Adrenal gland (tissue), 19 donors: ENCODE measurements at regions of chr5 and their contacts with region 1.

Region 1: DNA sequence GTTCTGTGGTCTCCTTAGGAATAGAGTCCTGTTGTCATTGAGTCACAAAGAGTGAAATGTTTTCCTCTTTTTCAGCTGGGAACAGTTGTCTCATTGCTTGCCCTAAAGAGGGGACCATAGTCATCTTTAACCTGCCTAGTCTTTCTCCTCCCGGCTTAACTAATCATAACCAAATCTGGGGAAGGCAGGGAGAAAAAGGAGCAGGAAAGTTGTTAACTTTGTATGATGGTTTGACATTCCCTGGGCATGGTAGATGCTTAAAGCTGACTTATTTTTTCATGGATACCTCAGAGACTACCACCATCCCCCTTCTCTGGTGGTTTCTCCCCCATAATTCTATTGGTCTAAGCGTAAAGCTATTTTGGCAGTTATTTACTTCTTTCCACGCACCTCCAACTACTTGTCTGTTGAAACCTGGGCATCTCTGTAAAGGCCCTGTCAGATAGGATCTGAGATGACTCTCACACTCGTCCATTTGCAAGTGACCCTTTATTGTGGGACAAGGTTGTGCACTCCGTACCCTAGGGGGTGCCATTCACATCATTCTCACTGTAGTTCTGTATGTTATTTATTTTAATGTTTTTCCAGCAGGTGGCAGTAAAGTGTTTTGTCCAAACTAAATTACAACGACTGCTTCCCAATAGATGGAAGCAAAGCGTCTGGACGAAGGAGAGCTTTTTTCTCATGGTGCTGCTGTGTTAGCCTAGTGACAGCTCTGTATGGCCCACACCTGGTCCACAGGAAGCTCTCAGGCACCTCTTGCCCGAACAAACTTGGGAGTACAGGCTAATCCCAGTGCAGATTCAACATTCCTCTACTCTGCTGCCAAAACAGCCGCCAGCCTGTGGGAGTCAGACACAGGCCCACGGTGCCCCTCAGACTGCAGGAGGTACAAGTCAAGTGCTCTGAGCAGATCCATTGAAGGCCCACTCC is 3.0 kb upstream of the FAM13B start:
- DNase-seq: peak; percentile 66 to 85 (median 71)
- H3K4me3 ChIP-seq: no peak overlapping the region
- H3K27ac ChIP-seq: peak overlapping the region in 3 of 5 donors; percentile 48 to 53 (median 52)
- H3K4me1 ChIP-seq: peaks cover 11 to 37% of the 10 kb centered on the region in 2 donors
- H3K27me3 ChIP-seq: no peaks in the 10 kb centered on the region
- CTCF ChIP-seq: peak; percentile 82 to 98 (median 90)
- POLR2A ChIP-seq: no peak

Region 2: DNA sequence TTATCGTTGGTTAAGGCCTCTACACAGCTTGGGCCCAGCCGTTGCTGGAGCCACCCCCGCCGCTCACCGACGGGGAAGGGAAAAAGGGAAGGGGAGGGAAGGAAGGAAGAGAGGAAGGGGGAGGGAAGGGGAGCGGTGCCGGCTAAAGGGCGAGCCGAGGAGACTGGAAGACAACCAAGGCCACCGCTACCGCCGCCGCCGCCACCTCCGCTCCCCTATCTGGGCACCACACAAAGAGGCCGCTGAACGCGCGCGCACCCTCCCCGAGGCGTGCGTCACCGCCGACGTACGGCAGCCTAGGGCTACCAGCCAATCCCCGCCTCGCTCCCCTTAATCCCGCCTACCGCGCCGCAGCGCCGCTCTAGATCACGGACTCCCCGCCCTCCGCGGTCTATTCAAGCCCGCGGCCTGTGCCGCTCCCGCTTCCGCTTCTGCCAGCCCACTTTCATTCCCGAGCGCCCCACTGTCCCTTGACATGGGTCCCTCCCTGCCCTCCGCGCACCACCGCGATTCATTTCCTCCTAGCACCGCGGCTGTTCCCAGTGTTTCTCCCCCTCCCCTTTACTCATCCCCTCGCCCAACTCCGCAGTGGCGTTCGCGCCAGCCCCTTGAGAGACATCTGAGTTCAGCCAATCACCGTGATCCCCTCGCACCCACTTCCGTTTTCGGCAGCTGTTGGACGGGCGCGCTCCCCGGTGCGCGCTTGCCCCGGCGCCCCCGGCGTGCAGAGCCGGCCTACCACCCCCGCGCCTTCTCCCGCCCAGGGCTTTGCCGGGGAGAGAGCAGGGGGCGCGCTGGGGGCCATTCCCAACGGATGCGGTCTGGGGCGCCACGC is 281.5 kb before region 1 on chr5 and contains the start of gene HNRNPA0:
- intact Hi-C with region 1: no loop called
- DNase-seq: peak; percentile 96 to 98 (median 98)
- H3K4me3 ChIP-seq: peak within 1 kb of the TSS; percentile 85 to 97 (median 90)
- H3K27ac ChIP-seq: peak within 1 kb of the TSS; percentile 98 to 100 (median 100)
- H3K4me1 ChIP-seq: peaks cover 8 to 30% of the 10 kb centered on the region in 2 donors
- H3K27me3 ChIP-seq: no peaks in the 10 kb centered on the region
- CTCF ChIP-seq: peak in 1 of 6 experiments; percentile 4
- POLR2A ChIP-seq: peak; percentile 95 to 99
- total RNA-seq, gene HNRNPA0: 8.9 to 45.5 (median 14.4) TPM

Region 3: DNA sequence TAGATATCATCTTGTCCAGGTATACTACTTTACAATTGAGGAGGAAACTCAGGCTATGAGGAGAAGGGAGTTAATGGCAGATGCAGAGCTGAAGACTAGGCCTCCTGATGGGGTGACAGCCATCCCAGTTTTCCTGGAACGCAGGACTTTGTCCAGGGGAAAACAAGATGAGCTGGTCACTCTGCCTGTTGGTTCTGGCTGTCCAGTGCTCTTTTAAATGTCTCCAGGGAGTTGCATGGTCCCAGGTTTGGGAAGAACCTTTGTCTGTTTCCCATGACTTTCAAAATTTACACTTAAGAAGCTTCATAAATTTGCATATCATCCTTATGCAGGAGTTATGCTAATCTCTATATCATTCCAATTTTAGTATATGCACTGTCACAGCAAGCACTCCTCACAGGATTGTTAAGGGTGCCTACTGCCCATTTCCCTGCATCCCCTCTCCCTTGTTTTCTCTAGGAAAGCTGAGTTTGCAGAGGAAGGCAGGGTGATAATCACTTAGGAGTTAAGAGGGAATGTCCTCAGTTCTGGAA is 33.3 kb after region 1 on chr5:
- intact Hi-C with region 1: loop called in 1 of 2 experiments (anchors 2 kb)
- DNase-seq: no peak
- H3K4me3 ChIP-seq: no peak overlapping the region
- H3K27ac ChIP-seq: no peak overlapping the region
- H3K4me1 ChIP-seq: no peaks in the 10 kb centered on the region
- H3K27me3 ChIP-seq: no peaks in the 10 kb centered on the region
- CTCF ChIP-seq: peak in 1 of 6 experiments; percentile 38
- POLR2A ChIP-seq: no peak

Region 4: GRCh38 chr5:138138949-138139780 is 103.3 kb after region 1 on chr5 and contains the start of gene NME5:
- intact Hi-C with region 1: loop called in 1 of 2 experiments (anchors 10 kb)
- DNase-seq: peak; percentile 69 to 89 (median 78)
- H3K4me3 ChIP-seq: peak within 1 kb of the TSS in 2 of 4 donors; percentile 33 to 58
- H3K27ac ChIP-seq: no peak within 1 kb of the TSS
- H3K4me1 ChIP-seq: peaks cover 0 to 4% of the 10 kb centered on the region in 2 donors
- H3K27me3 ChIP-seq: no peaks in the 10 kb centered on the region
- CTCF ChIP-seq: no peak
- POLR2A ChIP-seq: no peak
- total RNA-seq, gene NME5: 0.24 to 10.3 (median 5.4) TPM